Caco-2 (cell line): ENCODE measurements at regions of chr13 and their contacts with region 1.

Region 1: GRCh38 chr13:94549232-94550061 is 46.5 kb downstream of the TGDS start:
- DNase-seq: peak; percentile 93
- H3K4me3 ChIP-seq: peak overlapping the region; percentile 82
- H3K4me3 Mint-ChIP-seq: peak overlapping the region; percentile 86
- H3K27ac Mint-ChIP-seq: peak overlapping the region; percentile 91
- H3K4me1 ChIP-seq: peaks cover 8% of the 10 kb centered on the region
- H3K4me1 Mint-ChIP-seq: peaks cover 23% of the 10 kb centered on the region
- H3K27me3 ChIP-seq: no peaks in the 10 kb centered on the region
- H3K27me3 Mint-ChIP-seq: peaks cover 4% of the 10 kb centered on the region
- CTCF ChIP-seq: no peak

Region 2: GRCh38 chr13:94384231-94384905 is 165.1 kb before region 1 on chr13:
- CTCF ChIA-PET with region 1: no interaction called
- POLR2A ChIA-PET with region 1: no interaction called
- intact Hi-C with region 1: no loop called
- DNase-seq: no peak
- H3K4me3 ChIP-seq: no peak overlapping the region
- H3K4me3 Mint-ChIP-seq: no peak overlapping the region
- H3K27ac Mint-ChIP-seq: no peak overlapping the region
- H3K4me1 ChIP-seq: no peaks in the 10 kb centered on the region
- H3K4me1 Mint-ChIP-seq: no peaks in the 10 kb centered on the region
- H3K27me3 ChIP-seq: no peaks in the 10 kb centered on the region; the same call in none of the 2 replicates
- H3K27me3 Mint-ChIP-seq: peaks cover 29% of the 10 kb centered on the region
- CTCF ChIP-seq: no peak

Region 3: DNA sequence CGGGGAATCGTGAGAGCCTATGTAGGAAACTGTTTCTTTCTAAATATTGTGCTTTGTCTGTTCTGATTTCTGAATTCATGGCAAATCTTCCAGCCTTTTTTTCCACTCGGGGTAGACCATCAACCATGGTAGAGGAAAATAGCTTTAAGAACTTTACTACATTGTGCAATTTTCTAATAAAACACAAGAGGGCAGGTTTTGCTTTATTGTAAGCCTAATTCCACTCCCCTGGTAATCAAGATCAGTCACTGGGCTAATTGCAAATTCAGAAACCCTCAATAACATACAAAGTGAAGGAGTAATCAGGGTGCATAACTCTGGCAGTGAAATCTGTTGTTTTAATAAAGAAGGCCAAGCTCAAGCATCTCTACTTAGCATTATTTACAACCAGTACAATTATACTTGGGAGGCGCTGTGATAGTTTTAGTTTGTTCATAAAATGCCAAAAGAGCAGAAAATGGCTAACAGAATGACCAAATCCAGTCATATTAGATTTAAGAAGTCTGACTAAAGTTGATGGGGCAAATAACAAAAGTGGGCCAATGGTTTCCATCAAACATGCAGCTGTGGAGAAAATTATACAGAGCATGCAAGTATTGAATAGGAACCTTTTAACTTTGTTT is 113.7 kb before region 1 on chr13:
- CTCF ChIA-PET with region 1: interaction called, 16 read pairs
- POLR2A ChIA-PET with region 1: no interaction called
- intact Hi-C with region 1: loop called (anchors 1 kb)
- DNase-seq: peak in 1 of 2 experiments; percentile 34
- H3K4me3 ChIP-seq: no peak overlapping the region
- H3K4me3 Mint-ChIP-seq: no peak overlapping the region
- H3K27ac Mint-ChIP-seq: no peak overlapping the region
- H3K4me1 ChIP-seq: peaks cover 7% of the 10 kb centered on the region
- H3K4me1 Mint-ChIP-seq: peaks cover 19% of the 10 kb centered on the region
- H3K27me3 ChIP-seq: peaks cover 1% of the 10 kb centered on the region; the same call in 1 of the 2 replicates
- H3K27me3 Mint-ChIP-seq: peaks cover 2% of the 10 kb centered on the region
- CTCF ChIP-seq: peak; percentile 53 to 67

Region 4: DNA sequence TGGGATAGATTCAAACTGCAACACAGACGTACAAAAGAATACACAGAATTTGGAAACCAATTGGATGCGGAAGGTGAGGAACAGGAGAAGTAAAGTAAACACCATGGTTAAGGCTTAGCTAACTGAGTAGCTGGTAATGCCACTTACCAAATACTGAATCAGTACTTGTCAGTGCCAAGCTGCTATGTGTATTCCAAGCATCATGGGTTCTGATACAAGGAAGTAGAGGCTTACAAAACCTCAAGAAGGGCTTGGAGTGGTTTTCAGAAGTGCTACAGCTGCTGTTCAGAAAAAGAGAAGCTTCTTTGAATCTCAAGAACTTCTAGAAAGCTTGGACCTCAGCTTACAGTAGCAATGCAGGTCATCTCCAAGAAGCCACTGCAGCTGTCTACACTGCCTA is 34.1 kb before region 1 on chr13:
- CTCF ChIA-PET with region 1: no interaction called
- POLR2A ChIA-PET with region 1: no interaction called
- intact Hi-C with region 1: no loop called
- DNase-seq: no peak
- H3K4me3 ChIP-seq: no peak overlapping the region
- H3K4me3 Mint-ChIP-seq: no peak overlapping the region
- H3K27ac Mint-ChIP-seq: no peak overlapping the region
- H3K4me1 ChIP-seq: no peaks in the 10 kb centered on the region
- H3K4me1 Mint-ChIP-seq: no peaks in the 10 kb centered on the region
- H3K27me3 ChIP-seq: no peaks in the 10 kb centered on the region
- H3K27me3 Mint-ChIP-seq: peaks cover 15% of the 10 kb centered on the region
- CTCF ChIP-seq: no peak

Region 5: DNA sequence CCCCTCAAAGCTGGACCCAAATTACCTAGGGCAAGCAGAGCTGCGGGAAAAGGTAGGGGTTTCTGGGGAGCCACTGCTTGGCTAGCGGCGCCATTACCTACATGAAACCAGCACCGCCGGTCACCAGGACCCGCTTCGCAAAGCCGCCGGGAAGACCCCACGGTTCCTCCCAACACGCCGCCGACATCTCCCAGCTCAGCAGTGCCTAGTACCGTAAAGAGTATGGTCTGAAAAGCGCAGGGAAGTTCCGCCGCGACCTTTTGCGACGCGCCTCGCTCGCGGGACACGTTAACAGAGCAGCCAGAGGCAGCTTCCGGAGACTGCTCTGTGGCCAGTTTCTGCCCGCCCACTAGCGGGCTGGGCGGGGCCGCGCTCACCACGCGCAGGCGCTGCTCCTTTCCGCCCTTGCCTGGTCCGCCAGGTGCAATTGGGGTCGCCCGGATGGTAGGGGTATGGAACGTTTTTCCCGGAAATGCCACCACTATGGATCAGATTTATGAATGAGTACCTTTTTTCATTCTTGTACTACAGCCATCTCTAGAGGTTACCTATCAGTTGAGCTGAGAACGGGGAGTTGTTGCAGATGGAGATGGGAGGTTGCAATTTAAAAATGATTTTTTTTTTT is 46.6 kb after region 1 on chr13 and contains the start of gene TGDS:
- CTCF ChIA-PET with region 1: no interaction called
- POLR2A ChIA-PET with region 1: interaction called, 6 read pairs
- intact Hi-C with region 1: loop called (anchors 1 kb)
- DNase-seq: peak; percentile 93 to 96
- H3K4me3 ChIP-seq: peak within 1 kb of the TSS; percentile 67
- H3K4me3 Mint-ChIP-seq: peak within 1 kb of the TSS; percentile 83
- H3K27ac Mint-ChIP-seq: peak within 1 kb of the TSS; percentile 80
- H3K4me1 ChIP-seq: peaks cover 25% of the 10 kb centered on the region
- H3K4me1 Mint-ChIP-seq: peaks cover 15% of the 10 kb centered on the region
- H3K27me3 ChIP-seq: no peaks in the 10 kb centered on the region
- H3K27me3 Mint-ChIP-seq: no peaks in the 10 kb centered on the region
- CTCF ChIP-seq: no peak
- total RNA-seq, gene TGDS: 22.0 and 22.8 TPM in 2 replicates

Region 6: DNA sequence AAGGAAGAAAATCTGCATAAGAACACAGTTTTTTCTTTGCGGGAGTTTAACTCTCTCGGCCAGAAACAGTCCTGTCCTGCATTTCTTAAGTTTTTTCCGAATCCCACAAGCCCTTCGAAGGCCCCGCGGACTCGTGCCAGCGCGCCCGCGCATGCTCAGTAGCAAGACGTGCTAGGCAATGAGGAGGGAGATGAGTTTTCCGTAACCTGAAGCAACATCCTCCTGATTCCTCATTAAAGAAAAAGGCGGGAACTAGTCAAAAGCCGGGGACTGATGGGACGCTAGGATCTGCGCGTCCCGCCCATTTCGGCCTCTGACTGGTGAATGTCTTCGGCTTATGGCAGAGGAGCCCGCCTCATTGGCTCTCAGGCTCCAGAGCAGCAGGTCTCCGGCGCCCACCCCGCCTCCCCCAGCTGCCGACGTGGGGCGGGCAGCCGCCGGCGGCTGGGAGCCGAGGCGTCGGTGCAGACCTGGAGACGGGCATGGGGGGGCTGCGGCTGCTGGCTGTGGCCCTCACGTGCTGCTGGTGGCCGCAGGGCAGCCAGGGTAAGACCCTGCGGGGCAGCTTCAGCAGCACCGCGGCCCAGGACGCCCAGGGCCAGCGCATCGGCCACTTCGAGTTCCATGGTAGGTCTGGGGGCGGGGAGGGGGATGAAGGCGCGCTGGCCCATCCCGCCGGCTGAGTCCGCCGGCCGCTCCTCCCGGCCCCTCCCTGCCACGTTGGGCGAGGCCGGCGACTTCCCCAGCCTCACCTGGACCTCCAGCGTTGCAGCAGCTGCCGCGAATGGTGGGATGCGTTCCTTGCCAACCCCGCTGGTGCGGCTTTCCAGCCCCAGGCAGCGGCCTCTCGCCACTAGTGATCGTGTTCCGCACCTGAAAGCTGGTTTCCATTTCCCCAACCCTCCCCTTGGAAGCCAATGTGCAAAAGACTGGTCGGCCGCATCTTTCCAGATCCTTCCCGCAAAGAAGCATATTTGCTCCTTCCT is 52.3 kb after region 1 on chr13 and contains the start of gene GPR180:
- CTCF ChIA-PET with region 1: no interaction called
- POLR2A ChIA-PET with region 1: interaction called, 6 read pairs
- intact Hi-C with region 1: loop called (anchors 1 kb)
- DNase-seq: peak; percentile 97 to 99
- H3K4me3 ChIP-seq: peak within 1 kb of the TSS; percentile 68
- H3K4me3 Mint-ChIP-seq: peak within 1 kb of the TSS; percentile 93
- H3K27ac Mint-ChIP-seq: peak within 1 kb of the TSS; percentile 57
- H3K4me1 ChIP-seq: peaks cover 21% of the 10 kb centered on the region
- H3K4me1 Mint-ChIP-seq: peaks cover 17% of the 10 kb centered on the region
- H3K27me3 ChIP-seq: no peaks in the 10 kb centered on the region
- H3K27me3 Mint-ChIP-seq: no peaks in the 10 kb centered on the region
- CTCF ChIP-seq: no peak
- total RNA-seq, gene GPR180: 6.4 and 7.1 TPM in 2 replicates

Region 7: GRCh38 chr13:94620286-94620896 is 70.9 kb after region 1 on chr13:
- CTCF ChIA-PET with region 1: interaction called, 7 read pairs
- POLR2A ChIA-PET with region 1: no interaction called
- intact Hi-C with region 1: loop called (anchors 1 kb)
- DNase-seq: peak in 1 of 2 experiments; percentile 57
- H3K4me3 ChIP-seq: no peak overlapping the region
- H3K4me3 Mint-ChIP-seq: no peak overlapping the region
- H3K27ac Mint-ChIP-seq: no peak overlapping the region
- H3K4me1 ChIP-seq: no peaks in the 10 kb centered on the region
- H3K4me1 Mint-ChIP-seq: no peaks in the 10 kb centered on the region
- H3K27me3 ChIP-seq: no peaks in the 10 kb centered on the region
- H3K27me3 Mint-ChIP-seq: no peaks in the 10 kb centered on the region
- CTCF ChIP-seq: peak; percentile 80 to 89

Region 8: DNA sequence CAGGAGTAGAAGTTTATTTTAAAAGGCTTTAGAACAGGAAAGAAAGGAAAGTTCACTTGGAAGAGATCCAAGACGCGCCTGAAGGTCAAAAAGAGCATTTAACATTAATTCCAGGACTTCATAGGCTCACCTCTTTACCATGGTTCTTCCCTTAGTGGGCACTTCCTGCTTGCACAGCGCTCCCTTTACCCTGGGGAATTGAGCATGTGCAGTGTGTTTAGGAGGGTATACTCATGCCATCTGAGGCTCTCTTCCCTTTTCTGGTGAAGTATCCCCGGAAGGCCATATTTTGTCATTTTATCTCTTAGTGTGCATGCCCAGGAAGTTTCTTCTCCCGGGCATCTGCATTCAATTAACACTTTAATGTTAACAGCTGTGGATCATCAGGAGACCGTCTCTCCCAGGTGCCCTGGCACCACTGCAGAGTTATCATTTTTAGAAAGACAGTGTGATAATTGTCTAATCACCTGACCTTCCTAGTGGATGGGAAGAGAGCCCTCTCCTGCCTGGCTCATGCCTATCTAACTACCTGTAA is 817.9 kb after region 1 on chr13:
- CTCF ChIA-PET with region 1: no interaction called
- POLR2A ChIA-PET with region 1: no interaction called
- intact Hi-C with region 1: no loop called
- DNase-seq: no peak
- H3K4me3 ChIP-seq: no peak overlapping the region
- H3K4me3 Mint-ChIP-seq: no peak overlapping the region
- H3K27ac Mint-ChIP-seq: no peak overlapping the region
- H3K4me1 ChIP-seq: no peaks in the 10 kb centered on the region
- H3K4me1 Mint-ChIP-seq: no peaks in the 10 kb centered on the region
- H3K27me3 ChIP-seq: no peaks in the 10 kb centered on the region
- H3K27me3 Mint-ChIP-seq: no peaks in the 10 kb centered on the region
- CTCF ChIP-seq: no peak